Motor neuron (in vitro differentiated cells): ENCODE measurements at regions of chr1 and their contacts with region 1.

Region 1: DNA sequence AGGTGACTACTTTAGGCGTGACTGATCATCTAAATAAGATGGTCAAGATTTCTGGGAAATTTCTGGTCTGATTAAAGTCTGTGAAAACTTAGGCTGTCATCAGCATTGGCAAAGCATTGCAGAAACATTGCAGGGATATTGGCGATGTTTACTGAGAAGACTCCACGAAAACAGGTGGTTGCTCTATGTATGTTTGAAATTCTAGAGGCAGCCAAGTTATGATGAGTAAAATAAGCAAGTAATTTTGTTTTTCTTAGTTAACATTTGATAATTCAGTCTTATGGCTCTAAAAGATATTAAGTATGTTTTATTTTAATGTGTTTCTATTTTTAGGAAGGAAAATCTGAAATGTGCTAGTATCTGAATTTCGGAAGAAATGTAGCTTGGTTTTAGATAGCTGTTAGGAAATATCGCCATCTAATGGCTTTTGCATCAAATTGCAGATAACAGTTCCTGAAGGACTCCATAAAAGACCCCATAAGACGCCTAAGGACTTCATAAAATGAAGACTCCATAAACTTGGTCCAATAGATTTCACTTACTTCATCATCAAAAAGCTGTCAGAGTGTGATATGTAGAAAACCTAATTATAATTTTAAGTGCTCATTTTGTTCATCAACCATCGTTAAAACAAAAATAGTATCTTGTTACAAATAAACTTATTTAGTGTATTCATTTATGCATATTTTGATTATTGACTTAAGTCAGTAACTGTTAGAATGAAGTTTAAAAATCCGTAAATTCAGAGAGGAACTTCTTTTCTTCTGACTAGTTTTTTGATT is 344.6 kb downstream of the RYR2 start:
- ATAC-seq: peak in 1 of 8 experiments; percentile 53
- H3K4me3 ChIP-seq: no peak overlapping the region
- H3K27ac ChIP-seq: no peak overlapping the region
- H3K4me1 ChIP-seq: no peaks in the 10 kb centered on the region

Region 2: GRCh38 chr1:236759252-236759859 is 627.2 kb before region 1 on chr1:
- in situ Hi-C with region 1: loop called in 1 of 9 experiments (anchors 25 kb)
- ATAC-seq: peak in 2 of 8 experiments; percentile 32 to 37
- H3K4me3 ChIP-seq: no peak overlapping the region
- H3K27ac ChIP-seq: no peak overlapping the region
- H3K4me1 ChIP-seq: no peaks in the 10 kb centered on the region